Tibial artery (tissue), 4 donors: ENCODE measurements at regions of chr19 and their contacts with region 1.

Region 1: GRCh38 chr19:34733826-34734600 is at the start of gene ZNF181:
- DNase-seq: peak; percentile 85 to 93
- H3K4me3 ChIP-seq: peak within 1 kb of the TSS; percentile 59 to 73
- H3K27ac ChIP-seq: peak within 1 kb of the TSS; percentile 88 to 94
- H3K4me1 ChIP-seq: peaks cover 4 to 29% (median 19%) of the 10 kb centered on the region in 4 donors
- H3K27me3 ChIP-seq: no peaks in the 10 kb centered on the region
- CTCF ChIP-seq: no peak

Region 2: DNA sequence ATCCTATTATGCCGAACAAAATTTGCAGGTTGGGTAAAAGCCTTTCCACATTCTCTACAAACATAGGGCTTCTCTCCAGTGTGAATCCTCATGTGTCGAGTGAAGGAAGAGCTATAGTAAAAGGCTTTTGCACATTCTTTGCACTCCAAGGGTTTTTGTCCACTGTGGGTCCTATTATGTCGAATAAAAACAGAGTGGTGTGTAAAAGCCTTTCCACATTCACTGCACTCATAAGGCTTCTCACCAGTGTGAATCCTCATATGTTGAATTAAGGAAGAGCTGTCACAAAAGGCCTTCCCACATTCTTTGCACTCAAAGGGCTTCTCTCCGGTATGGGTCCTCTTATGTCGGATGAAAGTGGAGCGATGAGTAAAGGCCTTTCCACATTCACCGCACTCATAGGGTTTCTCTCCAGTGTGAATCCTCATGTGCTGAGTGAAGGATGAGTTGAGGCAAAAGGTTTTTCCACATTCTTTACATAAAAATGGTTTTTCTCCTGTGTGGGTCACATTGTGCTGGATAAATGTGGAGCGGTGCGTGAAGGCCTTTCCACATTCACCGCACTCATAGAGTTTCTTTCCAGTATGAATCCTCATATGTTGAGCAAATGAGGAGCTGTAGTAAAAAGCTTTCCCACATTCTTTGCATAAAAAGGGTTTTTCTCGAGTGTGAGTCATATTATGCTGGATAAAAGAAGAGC is 25.4 kb after region 1 on chr19:
- intact Hi-C with region 1: no loop called
- DNase-seq: no peak
- H3K4me3 ChIP-seq: no peak overlapping the region
- H3K27ac ChIP-seq: no peak overlapping the region
- H3K4me1 ChIP-seq: no peaks in the 10 kb centered on the region
- H3K27me3 ChIP-seq: no peaks in the 10 kb centered on the region
- CTCF ChIP-seq: no peak

Region 3: DNA sequence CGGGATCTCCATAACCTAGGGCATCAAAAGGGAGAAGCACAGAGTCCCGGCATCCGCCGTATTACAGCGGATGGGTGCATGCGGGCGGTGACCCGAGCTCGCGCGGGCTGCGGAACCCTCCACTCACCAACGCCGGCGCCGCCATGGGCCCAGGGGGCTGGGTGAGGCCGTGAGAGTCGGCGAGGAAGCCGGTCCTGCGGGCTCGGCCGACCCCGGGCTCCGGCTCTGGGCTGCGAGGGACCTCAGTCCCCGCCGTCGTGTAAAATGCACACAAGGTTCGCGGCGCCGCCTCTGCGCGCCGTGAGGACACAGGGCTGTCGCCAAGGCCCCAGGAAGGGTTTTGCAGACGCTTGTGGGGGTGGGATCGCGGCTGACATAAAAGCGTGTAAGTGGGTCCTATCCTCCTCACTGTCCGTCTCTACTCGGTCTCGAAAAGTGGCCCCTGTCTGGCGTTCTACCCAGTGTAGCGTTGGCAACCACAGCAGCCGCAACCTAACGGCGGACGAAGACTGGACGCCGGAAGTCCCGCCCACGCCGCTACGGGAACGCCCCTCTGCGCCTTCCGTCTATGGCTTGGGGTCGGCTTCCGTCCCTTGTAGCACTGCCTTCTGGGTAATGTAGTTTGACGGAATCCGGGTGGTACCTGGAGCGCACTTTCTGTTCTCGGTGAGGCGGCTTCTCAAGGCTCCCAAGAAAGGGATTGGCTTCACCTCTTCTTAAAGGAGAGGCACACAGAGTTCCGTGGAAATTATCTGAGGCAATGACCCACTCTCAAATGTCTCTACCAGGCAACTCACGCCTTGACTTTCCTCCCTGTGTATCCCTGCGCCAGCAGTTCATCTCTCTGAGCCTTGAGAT is 38.9 kb after region 1 on chr19 and contains the start of gene ZNF599:
- intact Hi-C with region 1: loop called (anchors 5 kb)
- DNase-seq: peak; percentile 87 to 94
- H3K4me3 ChIP-seq: peak within 1 kb of the TSS; percentile 76 to 82
- H3K27ac ChIP-seq: peak within 1 kb of the TSS; percentile 71 to 84
- H3K4me1 ChIP-seq: peaks cover 0 to 12% (median 10%) of the 10 kb centered on the region in 4 donors
- H3K27me3 ChIP-seq: no peaks in the 10 kb centered on the region
- CTCF ChIP-seq: no peak